Astrocyte of the cerebellum (primary cell): ENCODE measurements at regions of chr9 and their contacts with region 1.

Region 1: DNA sequence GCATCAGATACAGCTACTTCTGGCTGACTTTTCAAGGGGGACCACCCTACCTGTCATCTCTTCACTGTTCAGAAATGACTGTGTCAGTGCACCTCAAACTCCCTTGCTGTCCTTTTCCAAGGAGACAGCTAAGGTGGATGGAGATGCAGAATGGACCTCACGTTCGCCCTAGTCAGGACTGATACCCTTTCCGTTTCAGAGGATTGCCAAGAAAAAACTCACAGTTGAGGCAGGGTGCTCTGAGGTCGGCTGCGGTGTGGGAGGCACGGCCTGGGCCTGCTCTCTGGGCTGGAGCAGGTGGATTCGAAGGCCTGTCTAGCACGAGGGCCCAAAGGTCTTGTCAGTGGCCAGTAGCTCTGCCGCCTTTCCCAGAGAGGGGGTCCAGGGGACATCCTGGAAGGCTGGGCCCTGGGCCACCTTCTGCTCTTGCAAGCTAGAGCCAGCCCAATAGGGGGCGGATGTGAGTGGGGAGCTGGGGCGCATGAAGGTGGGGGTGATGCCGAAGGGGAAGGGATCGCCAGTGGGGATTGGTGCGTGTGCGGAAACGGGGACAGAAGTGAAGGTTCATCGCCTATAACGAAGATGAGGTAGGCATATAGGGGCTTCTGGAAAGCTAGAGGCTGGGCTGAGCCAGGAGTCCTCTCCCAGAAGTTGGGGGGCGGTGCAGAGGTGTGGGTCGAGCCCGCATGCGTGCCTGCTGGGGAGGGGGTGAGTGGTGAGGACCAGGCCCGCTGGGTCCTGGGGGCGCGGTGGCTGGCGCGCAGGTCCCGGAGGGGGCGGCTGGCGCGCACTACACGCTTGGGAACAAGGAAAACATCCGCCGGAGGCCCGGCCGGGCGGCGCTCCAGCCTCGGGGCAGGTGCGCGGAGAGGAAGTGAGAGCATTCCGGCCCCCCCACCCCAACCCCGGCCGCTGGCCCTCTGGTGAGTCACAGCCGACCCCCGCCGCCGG is 2.5 kb upstream of the MSMP start:
- DNase-seq: no peak
- H3K4me3 ChIP-seq: peak overlapping the region; percentile 40
- CTCF ChIP-seq: peak; percentile 58

Region 2: GRCh38 chr9:35882263-35882848 is 125.8 kb after region 1 on chr9:
- in situ Hi-C with region 1: loop called (anchors 25 kb)
- DNase-seq: peak; percentile 71
- H3K4me3 ChIP-seq: no peak overlapping the region
- CTCF ChIP-seq: peak; percentile 99